SK-N-SH (cell line): ENCODE measurements at regions of chr6 and their contacts with region 1.

Region 1: GRCh38 chr6:42166444-42167141 is 6.6 kb upstream of the GUCA1A start:
- DNase-seq: peak; percentile 89
- H3K4me3 ChIP-seq: no peak overlapping the region; a peak in 1 of 4 replicates
- H3K27ac ChIP-seq: no peak overlapping the region
- H3K4me1 ChIP-seq: no peaks in the 10 kb centered on the region; a peak in 1 of 4 replicates
- H3K27me3 ChIP-seq: no peaks in the 10 kb centered on the region
- CTCF ChIP-seq: peak; percentile 95
- EP300 ChIP-seq: no peak
- RAD21 ChIP-seq: peak; percentile 97

Region 2: DNA sequence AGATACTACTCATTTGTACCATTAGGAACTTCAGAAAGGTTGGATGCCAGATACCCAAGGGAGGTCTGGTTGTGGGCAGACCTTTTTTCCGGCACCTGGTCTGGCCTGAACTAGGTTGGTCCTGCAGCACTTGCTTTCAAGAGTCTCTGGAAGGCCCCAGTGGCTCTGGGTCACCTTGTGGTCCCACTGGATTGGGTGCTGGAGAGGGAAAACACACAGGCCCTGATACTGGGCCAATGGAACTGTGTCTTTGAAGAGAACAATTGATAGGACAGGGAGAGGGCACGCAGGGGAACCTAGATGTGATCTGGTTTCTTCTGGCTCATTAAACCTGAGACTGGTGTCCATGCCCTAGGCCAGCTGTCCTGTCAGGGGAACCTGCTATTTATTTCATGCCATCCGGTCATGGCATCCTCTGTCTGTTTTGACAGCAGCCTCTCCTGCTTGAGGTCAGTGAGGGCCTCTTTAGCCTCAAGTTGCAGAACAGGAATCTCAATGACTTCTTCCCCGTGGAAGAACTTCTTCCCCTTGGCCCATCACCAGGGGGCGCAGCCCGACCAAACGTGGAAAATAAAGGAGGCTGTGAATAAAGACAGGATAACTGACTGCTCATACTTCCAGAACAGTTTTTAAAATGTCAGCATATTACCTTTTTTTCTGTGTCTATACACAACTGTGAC is 91.3 kb before region 1 on chr6:
- CTCF ChIA-PET with region 1: interaction called, 159 read pairs
- POLR2A ChIA-PET with region 1: no interaction called
- DNase-seq: peak; percentile 78
- H3K4me3 ChIP-seq: no peak overlapping the region; a peak in 1 of 4 replicates
- H3K27ac ChIP-seq: no peak overlapping the region
- H3K4me1 ChIP-seq: no peaks in the 10 kb centered on the region
- H3K27me3 ChIP-seq: no peaks in the 10 kb centered on the region
- CTCF ChIP-seq: peak; percentile 94
- EP300 ChIP-seq: no peak
- RAD21 ChIP-seq: peak; percentile 93

Region 3: DNA sequence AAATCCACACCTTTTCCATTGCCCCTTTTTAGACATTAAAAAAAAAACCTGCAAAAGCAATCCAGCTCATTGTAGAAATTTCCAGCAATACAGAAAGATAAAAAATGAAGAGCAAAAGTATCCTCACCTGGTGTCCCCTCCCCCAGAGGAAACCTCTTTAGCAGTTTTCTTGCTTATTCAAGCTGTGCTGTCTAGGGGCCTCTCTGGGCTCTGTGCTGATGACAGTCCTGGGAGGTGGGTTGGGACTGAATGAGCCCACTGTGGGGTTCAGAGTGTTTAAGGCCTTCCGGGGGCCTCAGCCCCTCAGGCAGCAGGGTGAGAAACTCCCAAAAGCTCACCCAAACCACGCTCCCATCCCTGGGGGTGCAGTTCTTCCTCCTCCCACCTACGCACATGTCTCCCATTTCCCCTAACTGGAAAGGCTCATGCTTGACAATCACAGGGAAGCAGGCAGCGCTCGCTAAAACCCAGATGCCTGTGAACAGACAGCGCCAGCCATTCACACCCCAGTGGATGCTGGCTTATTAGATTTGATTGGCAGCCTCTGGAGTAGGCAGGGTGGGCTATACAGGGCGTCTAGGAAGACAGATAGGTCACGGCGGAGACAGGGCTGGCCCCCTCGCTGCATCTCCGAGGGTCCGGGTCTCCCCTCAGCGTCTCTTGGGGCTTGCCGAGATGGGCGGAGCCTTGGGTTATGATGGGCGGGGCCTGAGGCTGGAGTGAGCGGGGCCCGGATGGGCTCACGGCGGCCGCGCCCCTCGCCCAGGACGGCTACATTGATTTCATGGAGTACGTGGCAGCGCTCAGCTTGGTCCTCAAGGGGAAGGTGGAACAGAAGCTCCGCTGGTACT is 11.1 kb after region 1 on chr6:
- CTCF ChIA-PET with region 1: interaction called, 25 read pairs
- POLR2A ChIA-PET with region 1: no interaction called
- DNase-seq: peak; percentile 88
- H3K4me3 ChIP-seq: peak overlapping the region in 1 of 2 experiments; percentile 44; a peak in 2 of 4 replicates
- H3K27ac ChIP-seq: peak overlapping the region in 1 of 2 experiments; percentile 36; a peak in 1 of 4 replicates
- H3K4me1 ChIP-seq: peaks cover 0 to 13% of the 10 kb centered on the region in 2 experiments; a peak in 1 of 4 replicates
- H3K27me3 ChIP-seq: no peaks in the 10 kb centered on the region
- CTCF ChIP-seq: no peak
- EP300 ChIP-seq: no peak; a peak in 1 of 4 replicates
- RAD21 ChIP-seq: no peak